ENCODE measurements at regions of chr22 and their contacts with region 1.

Region 1: GRCh38 chr22:41940832-41941765 is 5.9 kb downstream of the CENPM start:
- DNase-seq: peak; percentile 79 to 85 (median 82)
- ATAC-seq: peak; percentile 95 to 98 (median 96)
- H3K4me3 ChIP-seq: no peak overlapping the region
- H3K27ac ChIP-seq: peak overlapping the region in 1 of 3 donors; percentile 8
- H3K4me1 ChIP-seq: peaks cover 0 to 4% (median 0%) of the 10 kb centered on the region in 4 donors
- H3K27me3 ChIP-seq: no peaks in the 10 kb centered on the region
- CTCF ChIP-seq: peak; percentile 90 to 97 (median 92)
- POLR2A ChIP-seq: no peak

Region 2: DNA sequence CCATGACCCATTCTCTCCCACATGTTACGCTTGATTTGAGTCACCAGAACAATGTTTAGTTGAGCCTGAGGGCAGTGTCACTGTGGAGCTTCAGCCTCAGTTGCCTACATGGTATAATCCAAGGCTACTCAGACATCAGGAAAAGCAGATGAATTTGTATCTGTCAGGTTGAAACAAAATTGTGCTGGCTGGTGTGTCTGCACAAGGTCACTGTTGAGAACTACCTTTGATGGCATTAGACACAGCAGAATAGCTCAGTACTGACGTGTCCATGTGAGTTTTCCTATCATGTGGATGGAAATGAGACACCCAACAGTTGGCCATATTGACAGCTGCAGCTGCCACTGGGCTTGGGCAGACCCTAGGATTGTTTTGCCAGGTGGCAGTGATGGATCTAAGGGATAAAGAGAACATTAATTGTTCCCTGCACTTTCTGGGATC is 124.9 kb before region 1 on chr22:
- intact Hi-C with region 1: loop called in 1 of 2 experiments (anchors 5 kb)
- DNase-seq: no peak
- ATAC-seq: no peak
- H3K4me3 ChIP-seq: no peak overlapping the region
- H3K27ac ChIP-seq: no peak overlapping the region
- H3K4me1 ChIP-seq: no peaks in the 10 kb centered on the region
- H3K27me3 ChIP-seq: no peaks in the 10 kb centered on the region
- CTCF ChIP-seq: no peak
- POLR2A ChIP-seq: no peak

Region 3: GRCh38 chr22:41826430-41827383 is 114.4 kb before region 1 on chr22:
- intact Hi-C with region 1: loop called in 1 of 2 experiments (anchors 5 kb)
- DNase-seq: no peak
- ATAC-seq: no peak
- H3K4me3 ChIP-seq: no peak overlapping the region
- H3K27ac ChIP-seq: peak overlapping the region in 1 of 3 donors; percentile 12
- H3K4me1 ChIP-seq: no peaks in the 10 kb centered on the region
- H3K27me3 ChIP-seq: no peaks in the 10 kb centered on the region
- CTCF ChIP-seq: no peak
- POLR2A ChIP-seq: no peak

Region 4: GRCh38 chr22:41983513-41984405 is 42.7 kb after region 1 on chr22:
- intact Hi-C with region 1: no loop called
- DNase-seq: peak in 1 of 3 donors; percentile 2
- ATAC-seq: peak in 3 of 4 donors; percentile 16 to 27 (median 26)
- H3K4me3 ChIP-seq: no peak overlapping the region
- H3K27ac ChIP-seq: no peak overlapping the region
- H3K4me1 ChIP-seq: no peaks in the 10 kb centered on the region
- H3K27me3 ChIP-seq: no peaks in the 10 kb centered on the region
- CTCF ChIP-seq: no peak
- POLR2A ChIP-seq: no peak

Region 5: GRCh38 chr22:42061041-42061440 is 119.9 kb after region 1 on chr22:
- intact Hi-C with region 1: no loop called
- DNase-seq: no peak
- ATAC-seq: no peak
- H3K4me3 ChIP-seq: no peak overlapping the region
- H3K27ac ChIP-seq: no peak overlapping the region
- H3K4me1 ChIP-seq: peaks cover 0 to 13% (median 6%) of the 10 kb centered on the region in 4 donors
- H3K27me3 ChIP-seq: no peaks in the 10 kb centered on the region
- CTCF ChIP-seq: no peak
- POLR2A ChIP-seq: no peak